Activated CD8-positive, alpha-beta memory T cell treated with anti-CD3 and anti-CD28 coated beads, Interleukin-2, amount 10 ng/mL, durations not matched to agents 7 days and 5 days (primary cell): ENCODE measurements at regions of chr11 and their contacts with region 1.

Region 1: GRCh38 chr11:61639816-61640443 is 40.3 kb upstream of the DAGLA start:
- DNase-seq: no peak
- ATAC-seq: no peak
- H3K4me3 Mint-ChIP-seq: no peak overlapping the region
- H3K27ac Mint-ChIP-seq: no peak overlapping the region
- H3K4me1 Mint-ChIP-seq: no peaks in the 10 kb centered on the region
- H3K27me3 Mint-ChIP-seq: peaks cover 3% of the 10 kb centered on the region

Region 2: DNA sequence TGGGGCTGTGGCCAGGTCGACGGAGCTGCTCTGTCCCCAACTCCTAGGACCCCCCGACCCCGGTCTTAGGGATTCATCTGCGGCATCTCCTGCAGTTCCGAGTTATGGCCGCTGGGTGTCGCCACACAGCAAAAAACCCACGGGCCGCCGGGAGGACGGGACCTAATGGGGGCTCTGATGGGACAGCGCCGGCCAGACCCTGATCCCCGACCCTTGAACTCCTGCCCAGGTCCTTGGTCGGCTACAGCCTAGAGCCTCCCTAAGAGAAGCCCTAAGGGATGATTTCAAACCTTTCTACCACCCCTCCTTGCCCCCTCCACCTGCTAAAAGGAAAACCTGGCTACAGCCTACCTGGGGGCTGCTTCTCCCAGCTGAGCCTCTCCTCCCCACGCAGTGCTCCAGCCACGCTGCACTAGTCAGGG is 162.2 kb before region 1 on chr11:
- CTCF ChIA-PET with region 1: interaction called, 12 read pairs
- DNase-seq: peak; percentile 61
- ATAC-seq: peak; percentile 37
- H3K4me3 Mint-ChIP-seq: no peak overlapping the region
- H3K27ac Mint-ChIP-seq: no peak overlapping the region
- H3K4me1 Mint-ChIP-seq: peaks cover 2% of the 10 kb centered on the region
- H3K27me3 Mint-ChIP-seq: no peaks in the 10 kb centered on the region

Region 3: DNA sequence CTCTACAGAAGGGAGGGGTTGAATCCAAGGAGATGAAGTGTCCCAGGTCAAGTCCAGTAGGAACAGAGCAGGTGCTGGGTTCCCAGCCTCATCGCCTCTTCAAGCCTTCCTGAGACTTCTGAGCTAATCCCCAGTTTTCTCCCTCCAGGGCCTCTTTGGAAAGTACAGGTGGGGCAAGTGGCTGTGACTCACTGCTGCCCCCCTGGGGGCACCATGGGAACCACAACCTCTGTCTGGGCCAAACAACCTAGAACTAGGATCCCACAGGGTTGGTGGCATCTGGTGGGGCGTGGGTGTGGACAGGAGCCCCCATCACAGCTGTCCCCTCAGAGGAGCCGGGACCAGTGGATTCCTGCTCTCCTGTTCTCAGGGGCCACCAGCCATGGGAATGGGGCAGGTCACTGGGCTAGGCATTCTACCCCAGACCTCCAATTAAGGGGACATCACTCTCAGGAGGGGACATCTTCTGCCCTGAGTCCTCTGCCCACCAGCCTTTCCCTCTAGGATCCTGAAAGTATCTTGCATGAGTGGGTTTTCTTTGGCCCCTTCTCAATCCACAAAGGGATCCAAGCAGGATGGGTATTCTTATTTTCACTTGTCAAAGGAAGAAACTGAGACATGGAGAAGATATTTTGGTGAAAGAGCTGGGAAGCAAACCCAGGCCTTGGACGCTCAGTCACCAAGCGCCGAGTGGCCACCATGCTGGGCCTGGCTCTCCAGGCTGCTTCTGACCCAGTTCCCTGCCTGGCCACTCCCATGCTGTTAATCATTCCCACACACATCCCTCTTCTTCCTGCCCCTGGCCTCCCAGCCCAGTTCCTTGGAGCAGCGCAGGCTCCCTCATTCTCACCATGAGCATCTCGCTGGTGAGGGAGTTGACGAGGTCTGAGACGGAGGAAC is 107.5 kb before region 1 on chr11:
- CTCF ChIA-PET with region 1: interaction called, 11 read pairs
- DNase-seq: peak; percentile 49
- ATAC-seq: peak; percentile 73
- H3K4me3 Mint-ChIP-seq: no peak overlapping the region
- H3K27ac Mint-ChIP-seq: no peak overlapping the region
- H3K4me1 Mint-ChIP-seq: no peaks in the 10 kb centered on the region
- H3K27me3 Mint-ChIP-seq: peaks cover 4% of the 10 kb centered on the region

Region 4: GRCh38 chr11:61650781-61651571 is 11.0 kb after region 1 on chr11:
- CTCF ChIA-PET with region 1: interaction called, 22 read pairs
- DNase-seq: no peak
- ATAC-seq: no peak
- H3K4me3 Mint-ChIP-seq: no peak overlapping the region
- H3K27ac Mint-ChIP-seq: no peak overlapping the region
- H3K4me1 Mint-ChIP-seq: no peaks in the 10 kb centered on the region
- H3K27me3 Mint-ChIP-seq: peaks cover 27% of the 10 kb centered on the region

Region 5: DNA sequence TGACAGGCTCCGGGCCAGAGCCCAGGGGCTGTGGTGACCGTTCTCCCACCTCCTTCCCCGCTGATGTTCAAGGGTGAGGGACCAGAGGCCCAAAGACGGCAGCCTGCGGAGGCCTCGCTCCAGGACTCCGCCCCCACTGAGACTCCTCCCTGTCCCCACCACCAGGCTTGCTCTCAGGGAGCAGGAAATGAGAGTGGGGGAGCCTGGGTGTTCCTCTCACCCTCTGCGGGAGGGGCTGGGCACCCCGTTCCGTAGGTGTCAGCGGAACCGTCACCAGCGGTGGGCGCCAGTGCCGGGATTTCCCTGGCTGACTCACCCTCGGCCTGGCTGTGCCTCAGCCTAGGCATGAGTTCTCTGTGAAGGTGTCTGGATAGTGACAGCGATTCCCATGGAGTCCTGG is 56.0 kb after region 1 on chr11:
- CTCF ChIA-PET with region 1: no interaction called
- DNase-seq: peak; percentile 93
- ATAC-seq: peak; percentile 98
- H3K4me3 Mint-ChIP-seq: no peak overlapping the region
- H3K27ac Mint-ChIP-seq: peak overlapping the region; percentile 43
- H3K4me1 Mint-ChIP-seq: peaks cover 27% of the 10 kb centered on the region
- H3K27me3 Mint-ChIP-seq: peaks cover 14% of the 10 kb centered on the region